Activated CD4-positive, alpha-beta T cell treated with anti-CD3 and anti-CD28 coated beads, Interleukin-2, amount 10 ng/mL, durations not matched to agents 24 days and 14 days (primary cell): ENCODE measurements at regions of chr7 and their contacts with region 1.

Region 1: GRCh38 chr7:17126413-17127268 is 171.8 kb upstream of the AHR start:
- DNase-seq: no peak
- H3K4me3 Mint-ChIP-seq: no peak overlapping the region
- H3K27ac Mint-ChIP-seq: peak overlapping the region; percentile 48
- H3K4me1 Mint-ChIP-seq: peaks cover 21% of the 10 kb centered on the region
- H3K27me3 Mint-ChIP-seq: no peaks in the 10 kb centered on the region

Region 2: DNA sequence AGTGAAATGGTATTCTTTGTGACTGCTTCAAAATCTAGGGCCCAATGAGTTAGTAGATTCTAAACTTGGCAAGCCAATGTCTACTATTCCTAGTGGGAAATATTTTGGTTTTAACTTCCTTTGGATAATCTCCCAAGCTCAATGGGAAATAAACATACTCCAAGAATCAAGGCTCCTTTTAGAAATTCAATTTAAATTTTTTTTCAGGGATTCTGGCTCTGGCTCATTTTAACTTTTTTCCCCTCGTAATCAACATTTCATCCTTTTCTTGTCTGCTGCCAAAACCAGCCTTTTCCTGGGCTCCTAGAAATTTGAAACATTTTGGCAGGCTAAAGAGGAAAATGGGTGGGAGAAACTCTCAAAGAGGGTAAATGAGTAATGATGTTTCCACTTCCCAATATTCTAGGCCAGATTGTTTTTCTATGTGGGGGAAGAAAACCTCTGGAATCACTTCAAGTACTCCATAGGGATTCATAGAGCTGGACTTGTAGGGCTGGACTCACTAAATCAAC is 159.3 kb before region 1 on chr7:
- intact Hi-C with region 1: no loop called
- DNase-seq: no peak
- H3K4me3 Mint-ChIP-seq: no peak overlapping the region
- H3K27ac Mint-ChIP-seq: no peak overlapping the region
- H3K4me1 Mint-ChIP-seq: no peaks in the 10 kb centered on the region
- H3K27me3 Mint-ChIP-seq: peaks cover 24% of the 10 kb centered on the region

Region 3: GRCh38 chr7:17166824-17167379 is 40.3 kb after region 1 on chr7:
- intact Hi-C with region 1: loop called (anchors 5 kb)
- DNase-seq: no peak
- H3K4me3 Mint-ChIP-seq: no peak overlapping the region
- H3K27ac Mint-ChIP-seq: peak overlapping the region; percentile 8
- H3K4me1 Mint-ChIP-seq: peaks cover 30% of the 10 kb centered on the region
- H3K27me3 Mint-ChIP-seq: no peaks in the 10 kb centered on the region